ENCODE measurements at regions of chr14 and their contacts with region 1.

Region 1: DNA sequence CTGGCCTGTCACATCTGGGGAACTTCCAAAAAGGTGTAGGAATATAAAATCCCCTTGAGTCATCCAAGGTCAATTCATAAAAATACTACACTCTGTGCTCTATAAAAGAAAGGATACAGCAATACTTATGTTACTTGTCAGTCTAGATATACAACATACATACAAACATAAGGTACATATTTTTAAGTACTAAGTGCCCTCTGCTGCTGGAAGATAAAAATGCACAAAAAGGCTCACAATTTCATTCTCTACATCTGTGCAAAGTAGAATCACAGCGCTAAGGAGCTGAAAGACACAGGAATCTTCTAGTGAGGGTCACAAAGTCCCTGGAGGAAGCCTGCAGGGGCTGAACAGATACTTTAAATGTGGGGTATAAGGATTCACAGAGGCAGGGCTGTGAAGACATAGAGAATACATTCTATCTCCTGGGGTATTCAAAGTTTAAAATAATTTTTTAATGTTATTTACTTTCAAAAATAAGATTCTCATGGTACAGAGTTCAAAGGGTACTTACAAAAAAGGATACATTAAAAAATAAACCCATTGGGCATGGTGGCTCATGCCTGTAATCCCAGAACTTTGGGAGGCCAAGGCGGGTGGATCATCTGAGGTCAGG is 10.2 kb upstream of the GOLGA5 start:
- DNase-seq: no peak
- ATAC-seq: peak; percentile 85
- H3K4me3 Mint-ChIP-seq: no peak overlapping the region
- H3K27ac Mint-ChIP-seq: no peak overlapping the region
- H3K4me1 Mint-ChIP-seq: peaks cover 13% of the 10 kb centered on the region
- H3K27me3 Mint-ChIP-seq: no peaks in the 10 kb centered on the region
- CTCF ChIP-seq: peak; percentile 34

Region 2: DNA sequence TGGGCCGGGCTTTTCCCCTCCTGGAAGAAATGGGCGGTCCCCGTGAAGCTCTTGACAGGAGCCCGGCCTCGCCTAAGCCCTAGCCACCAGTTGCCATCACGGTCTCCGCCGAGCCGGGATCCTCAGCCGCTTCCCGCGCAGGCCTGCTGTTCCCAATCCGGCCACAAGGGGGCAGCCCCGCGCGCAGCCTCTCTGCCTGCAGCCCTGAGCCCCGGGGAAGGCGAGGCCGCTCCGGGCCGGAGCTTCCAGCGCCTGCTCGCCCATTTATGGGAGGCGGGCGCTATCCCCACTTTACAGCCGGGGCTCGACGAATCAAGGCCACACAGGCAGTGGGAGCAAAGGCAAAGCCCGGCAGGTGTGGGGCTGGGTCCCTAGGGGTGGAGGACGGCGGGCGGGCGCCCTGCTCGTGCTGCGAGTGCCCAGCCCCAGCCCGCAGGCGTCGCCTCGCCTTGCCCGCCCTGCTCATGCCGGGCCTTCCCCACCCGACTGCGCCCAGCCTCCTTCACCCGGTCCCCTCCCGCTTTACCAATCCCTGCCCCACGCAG is 97.0 kb before region 1 on chr14:
- CTCF ChIA-PET with region 1: interaction called, 24 read pairs
- POLR2A ChIA-PET with region 1: interaction called, 3 read pairs
- intact Hi-C with region 1: loop called (anchors 1 kb)
- DNase-seq: peak; percentile 83
- ATAC-seq: peak; percentile 90
- H3K4me3 Mint-ChIP-seq: no peak overlapping the region
- H3K27ac Mint-ChIP-seq: no peak overlapping the region
- H3K4me1 Mint-ChIP-seq: no peaks in the 10 kb centered on the region
- H3K27me3 Mint-ChIP-seq: no peaks in the 10 kb centered on the region
- CTCF ChIP-seq: peak; percentile 89

Region 3: GRCh38 chr14:92712654-92713051 is 71.3 kb before region 1 on chr14:
- CTCF ChIA-PET with region 1: interaction called, 73 read pairs
- POLR2A ChIA-PET with region 1: no interaction called
- intact Hi-C with region 1: loop called (anchors 1 kb)
- DNase-seq: no peak
- ATAC-seq: no peak
- H3K4me3 Mint-ChIP-seq: no peak overlapping the region
- H3K27ac Mint-ChIP-seq: no peak overlapping the region
- H3K4me1 Mint-ChIP-seq: no peaks in the 10 kb centered on the region
- H3K27me3 Mint-ChIP-seq: no peaks in the 10 kb centered on the region
- CTCF ChIP-seq: no peak

Region 4: DNA sequence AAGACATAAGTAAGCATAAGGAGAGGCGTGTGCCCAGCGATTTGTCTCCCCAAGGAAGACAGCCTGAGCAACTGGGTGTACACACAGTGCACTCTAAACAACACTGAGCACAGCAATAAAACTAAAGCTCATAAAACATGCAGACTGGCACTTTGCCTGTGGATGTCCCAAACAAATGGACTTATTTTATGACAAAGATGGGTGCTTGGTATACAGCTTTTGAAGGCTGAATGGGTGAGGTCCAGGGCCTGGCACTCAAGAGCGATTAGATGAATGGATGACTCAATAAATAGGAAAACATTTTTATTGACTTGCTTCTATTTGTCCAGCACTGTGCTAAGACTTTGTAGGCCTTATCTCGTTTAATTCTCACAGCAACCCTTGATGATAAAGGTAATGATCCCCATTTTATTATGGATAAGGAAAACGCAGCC is 64.0 kb before region 1 on chr14:
- CTCF ChIA-PET with region 1: interaction called, 73 read pairs
- POLR2A ChIA-PET with region 1: no interaction called
- intact Hi-C with region 1: no loop called
- DNase-seq: no peak
- ATAC-seq: no peak
- H3K4me3 Mint-ChIP-seq: no peak overlapping the region
- H3K27ac Mint-ChIP-seq: no peak overlapping the region
- H3K4me1 Mint-ChIP-seq: no peaks in the 10 kb centered on the region
- H3K27me3 Mint-ChIP-seq: no peaks in the 10 kb centered on the region
- CTCF ChIP-seq: no peak

Region 5: DNA sequence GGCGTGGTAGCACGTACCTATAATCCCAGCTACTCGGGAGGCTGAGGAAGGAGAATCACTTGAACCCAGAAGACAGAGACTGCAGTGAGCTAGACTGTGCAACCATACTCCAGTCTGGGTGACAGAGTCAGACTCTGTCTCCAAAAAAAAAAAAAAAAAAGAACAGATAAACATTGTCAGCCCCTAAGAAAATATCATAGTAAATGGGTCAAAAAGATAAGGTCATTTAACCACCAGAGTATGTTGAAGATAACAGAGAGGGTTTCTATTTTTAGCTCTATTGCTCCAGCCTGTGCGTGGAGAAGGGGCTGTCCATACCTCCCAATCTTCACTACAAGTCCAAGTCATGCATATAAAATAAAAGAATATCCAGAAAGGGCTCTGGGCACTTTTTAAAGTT is 50.9 kb before region 1 on chr14:
- CTCF ChIA-PET with region 1: no interaction called
- POLR2A ChIA-PET with region 1: no interaction called
- intact Hi-C with region 1: no loop called
- DNase-seq: no peak
- ATAC-seq: no peak
- H3K4me3 Mint-ChIP-seq: no peak overlapping the region
- H3K27ac Mint-ChIP-seq: no peak overlapping the region
- H3K4me1 Mint-ChIP-seq: peaks cover 21% of the 10 kb centered on the region
- H3K27me3 Mint-ChIP-seq: no peaks in the 10 kb centered on the region
- CTCF ChIP-seq: no peak

Region 6: DNA sequence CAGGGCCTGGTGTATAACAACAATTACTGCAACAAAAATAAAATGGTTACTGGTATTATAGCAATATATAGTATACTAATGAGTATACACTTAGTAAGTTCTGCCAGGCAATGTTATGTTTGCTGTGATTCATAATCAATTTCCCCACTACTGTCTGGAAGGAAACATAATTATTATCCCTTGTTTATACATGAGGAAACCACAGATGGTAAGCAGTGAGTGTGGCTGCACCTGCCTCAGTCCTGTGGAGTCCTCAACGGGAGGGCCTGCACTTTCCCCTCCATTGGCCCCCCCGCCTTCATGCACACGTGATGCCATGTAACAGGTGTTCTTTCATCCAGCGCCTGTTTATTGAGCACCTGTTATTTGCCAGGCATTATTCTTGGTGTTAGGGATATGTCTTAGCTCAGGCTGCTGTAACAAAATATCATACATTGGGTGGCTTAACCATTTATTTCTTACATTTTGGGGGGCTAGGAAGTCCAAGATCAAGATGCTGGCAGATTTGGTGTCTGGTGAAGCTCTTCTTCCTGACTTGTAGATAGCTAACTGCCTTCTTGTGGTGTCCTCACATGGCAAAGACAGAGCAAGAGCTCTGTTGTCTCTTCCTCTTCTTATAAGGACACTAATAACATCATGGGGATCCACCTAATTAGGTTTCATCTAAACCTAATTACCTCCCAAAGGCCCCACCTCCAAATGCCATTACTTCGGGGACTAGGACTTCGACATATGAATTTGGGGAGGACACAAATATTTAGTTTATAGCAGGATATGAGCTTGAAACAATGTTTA is 79.6 kb after region 1 on chr14:
- CTCF ChIA-PET with region 1: no interaction called
- POLR2A ChIA-PET with region 1: no interaction called
- intact Hi-C with region 1: no loop called
- DNase-seq: no peak
- ATAC-seq: no peak
- H3K4me3 Mint-ChIP-seq: no peak overlapping the region
- H3K27ac Mint-ChIP-seq: no peak overlapping the region
- H3K4me1 Mint-ChIP-seq: no peaks in the 10 kb centered on the region
- H3K27me3 Mint-ChIP-seq: peaks cover 7% of the 10 kb centered on the region
- CTCF ChIP-seq: no peak